ENCODE measurements at regions of chr1 and their contacts with region 1.

Region 1: DNA sequence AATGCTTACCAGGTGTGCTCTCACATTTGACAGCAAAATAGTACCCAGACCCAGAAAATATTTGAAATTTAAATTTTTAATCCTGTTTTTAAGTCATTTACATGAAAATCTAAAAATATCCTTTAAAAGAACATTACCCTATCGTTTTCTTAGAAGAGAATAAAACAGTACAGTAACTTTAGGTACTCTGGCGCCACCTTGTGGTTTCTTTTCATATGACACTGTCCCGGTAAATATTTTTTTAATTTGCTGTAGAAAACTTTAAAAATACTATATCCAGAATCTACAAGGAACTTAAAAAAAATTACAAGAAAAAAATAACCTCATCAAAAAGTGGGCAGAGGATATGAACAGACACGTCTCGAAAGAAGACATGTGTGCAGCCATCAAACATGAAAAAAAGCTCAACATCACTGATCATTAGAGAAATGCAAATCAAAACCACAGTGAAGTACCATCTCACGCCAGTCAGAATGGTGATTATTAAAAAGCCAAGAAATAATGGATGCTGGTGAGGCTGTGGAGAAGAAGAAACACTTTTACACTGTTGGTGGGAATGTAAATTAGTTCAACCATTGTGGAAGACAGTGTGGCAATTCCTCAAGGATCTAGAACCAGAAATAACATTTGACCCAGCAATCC is 129.2 kb downstream of the RGS21 start:
- DNase-seq: peak; percentile 7
- ATAC-seq: no peak
- H3K4me3 ChIP-seq: no peak overlapping the region
- H3K27ac ChIP-seq: no peak overlapping the region
- H3K4me1 ChIP-seq: no peaks in the 10 kb centered on the region
- H3K27me3 ChIP-seq: no peaks in the 10 kb centered on the region; a peak in 1 of 5 replicates
- CTCF ChIP-seq: peak; percentile 55
- EP300 ChIP-seq: no peak
- POLR2A ChIP-seq: no peak
- RAD21 ChIP-seq: no peak

Region 2: GRCh38 chr1:191561276-191561675 is 884.7 kb before region 1 on chr1:
- CTCF ChIA-PET with region 1: no interaction called
- POLR2A ChIA-PET with region 1: no interaction called
- in situ Hi-C with region 1: no loop called
- intact Hi-C with region 1: no loop called
- DNase-seq: no peak
- ATAC-seq: no peak
- H3K4me3 ChIP-seq: no peak overlapping the region
- H3K27ac ChIP-seq: no peak overlapping the region
- H3K4me1 ChIP-seq: no peaks in the 10 kb centered on the region
- H3K27me3 ChIP-seq: no peaks in the 10 kb centered on the region
- CTCF ChIP-seq: no peak
- EP300 ChIP-seq: no peak
- POLR2A ChIP-seq: no peak
- RAD21 ChIP-seq: no peak

Region 3: GRCh38 chr1:191993549-191993948 is 452.4 kb before region 1 on chr1:
- CTCF ChIA-PET with region 1: no interaction called
- POLR2A ChIA-PET with region 1: no interaction called
- in situ Hi-C with region 1: no loop called
- intact Hi-C with region 1: loop called (anchors 5 kb)
- DNase-seq: peak; percentile 2
- ATAC-seq: no peak; the same call in 2 of the 3 replicates
- H3K4me3 ChIP-seq: no peak overlapping the region
- H3K27ac ChIP-seq: no peak overlapping the region
- H3K4me1 ChIP-seq: no peaks in the 10 kb centered on the region
- H3K27me3 ChIP-seq: no peaks in the 10 kb centered on the region
- CTCF ChIP-seq: no peak
- EP300 ChIP-seq: no peak
- POLR2A ChIP-seq: no peak
- RAD21 ChIP-seq: no peak

Measured in HepG2 (cell line).